ENCODE measurements at regions of chr2 and their contacts with region 1.

Region 1: GRCh38 chr2:197889041-197889440 is 84.6 kb downstream of the PLCL1 start:
- DNase-seq: peak in 8 of 9 donors; percentile 31 to 77 (median 60)
- ATAC-seq: peak; percentile 90
- H3K4me3 ChIP-seq: no peak overlapping the region
- H3K4me3 Mint-ChIP-seq: peak overlapping the region; percentile 26 to 88 (median 72)
- H3K27ac ChIP-seq: peak overlapping the region; percentile 72
- H3K27ac Mint-ChIP-seq: peak overlapping the region; percentile 63 to 97 (median 89)
- H3K4me1 ChIP-seq: peaks cover 0 to 49% of the 10 kb centered on the region in 2 donors
- H3K4me1 Mint-ChIP-seq: peaks cover 27 to 90% (median 71%) of the 10 kb centered on the region in 7 donors
- H3K27me3 ChIP-seq: no peaks in the 10 kb centered on the region
- H3K27me3 Mint-ChIP-seq: no peaks in the 10 kb centered on the region

Region 2: GRCh38 chr2:197838036-197838435 is 51.0 kb before region 1 on chr2:
- CTCF ChIA-PET with region 1: no interaction called
- POLR2A ChIA-PET with region 1: interaction called, 6 read pairs
- intact Hi-C with region 1: loop called (anchors 1 to 2 kb)
- DNase-seq: peak in 7 of 9 donors; percentile 41 to 71 (median 59)
- ATAC-seq: peak; percentile 88
- H3K4me3 ChIP-seq: peak overlapping the region; percentile 31
- H3K4me3 Mint-ChIP-seq: peak overlapping the region; percentile 65 to 84 (median 80)
- H3K27ac ChIP-seq: peak overlapping the region; percentile 75
- H3K27ac Mint-ChIP-seq: peak overlapping the region; percentile 79 to 98 (median 94)
- H3K4me1 ChIP-seq: peaks cover 0 to 55% of the 10 kb centered on the region in 2 donors
- H3K4me1 Mint-ChIP-seq: peaks cover 28 to 88% (median 67%) of the 10 kb centered on the region in 7 donors
- H3K27me3 ChIP-seq: no peaks in the 10 kb centered on the region
- H3K27me3 Mint-ChIP-seq: no peaks in the 10 kb centered on the region

Region 3: DNA sequence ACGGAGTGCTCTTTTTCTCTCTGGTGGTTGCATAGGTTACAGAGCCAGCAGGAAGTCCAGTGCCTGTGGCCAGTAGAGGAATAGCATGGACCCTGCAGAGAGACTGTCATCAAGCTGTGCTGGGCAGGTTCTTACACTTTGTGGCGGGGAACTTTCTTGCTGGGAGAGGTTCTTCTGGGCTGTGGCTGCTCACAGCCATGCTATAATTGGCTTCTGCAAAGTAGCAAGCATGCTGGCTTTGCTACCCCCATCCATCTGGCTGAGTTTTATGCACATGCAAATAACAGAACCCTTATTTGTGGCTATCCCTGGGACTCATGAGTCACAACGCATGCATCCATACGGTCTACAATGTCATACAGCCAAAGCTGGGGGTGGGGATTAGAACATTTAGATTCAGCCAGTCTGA is 15.7 kb before region 1 on chr2:
- CTCF ChIA-PET with region 1: interaction called, 4 read pairs
- POLR2A ChIA-PET with region 1: interaction called, 8 read pairs
- intact Hi-C with region 1: loop called (anchors 1 kb)
- DNase-seq: no peak
- ATAC-seq: no peak
- H3K4me3 ChIP-seq: no peak overlapping the region
- H3K4me3 Mint-ChIP-seq: peak overlapping the region in 1 of 10 donors; percentile 33
- H3K27ac ChIP-seq: no peak overlapping the region
- H3K27ac Mint-ChIP-seq: peak overlapping the region in 3 of 9 donors; percentile 28 to 62 (median 47)
- H3K4me1 ChIP-seq: peaks cover 0 to 34% of the 10 kb centered on the region in 2 donors
- H3K4me1 Mint-ChIP-seq: peaks cover 29 to 92% (median 85%) of the 10 kb centered on the region in 7 donors
- H3K27me3 ChIP-seq: no peaks in the 10 kb centered on the region
- H3K27me3 Mint-ChIP-seq: no peaks in the 10 kb centered on the region

Region 4: DNA sequence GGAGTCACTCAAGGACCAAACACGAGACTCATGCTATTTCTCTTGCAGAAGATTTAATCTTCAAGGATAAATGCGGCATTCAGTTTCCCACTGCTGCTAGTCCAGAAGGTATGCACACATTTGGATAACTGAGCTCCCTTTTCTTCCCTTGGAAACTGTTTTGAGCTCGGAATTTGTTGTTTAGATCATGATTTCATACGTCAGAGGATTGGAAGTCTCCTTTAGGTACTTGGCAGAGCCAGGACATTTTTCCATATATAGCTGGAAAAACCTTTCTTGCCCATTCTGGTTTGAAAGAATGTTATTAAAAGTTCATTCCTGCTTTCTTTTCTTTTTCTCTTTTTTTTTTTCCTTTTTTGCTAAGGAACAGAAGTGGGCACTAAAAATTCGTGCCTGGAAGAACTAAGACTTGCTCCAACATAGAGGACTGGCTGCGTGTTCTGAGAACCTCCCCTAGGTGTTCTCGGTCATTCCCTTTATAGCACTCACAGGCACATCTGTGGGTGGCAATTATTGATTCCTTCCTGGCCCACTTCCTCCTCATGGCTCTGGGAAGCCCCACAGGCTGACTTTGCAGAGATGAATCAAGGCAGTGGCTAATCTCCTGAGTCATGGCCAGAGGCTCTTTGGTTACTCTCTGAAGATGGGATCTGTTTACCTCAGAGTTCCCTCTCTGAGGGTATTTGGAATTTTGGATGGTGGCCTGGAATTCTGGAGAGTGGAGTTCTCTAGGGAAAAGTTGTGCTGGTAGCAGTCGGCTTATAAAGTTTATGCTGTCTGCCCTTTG is 20.1 kb after region 1 on chr2:
- CTCF ChIA-PET with region 1: interaction called, 4 read pairs
- POLR2A ChIA-PET with region 1: interaction called, 6 read pairs
- intact Hi-C with region 1: loop called in 1 of 2 experiments (anchors 2 kb)
- DNase-seq: no peak
- ATAC-seq: no peak
- H3K4me3 ChIP-seq: no peak overlapping the region
- H3K4me3 Mint-ChIP-seq: no peak overlapping the region
- H3K27ac ChIP-seq: no peak overlapping the region
- H3K27ac Mint-ChIP-seq: peak overlapping the region in 1 of 9 donors; percentile 18
- H3K4me1 ChIP-seq: peaks cover 0 to 12% of the 10 kb centered on the region in 2 donors
- H3K4me1 Mint-ChIP-seq: peaks cover 4 to 77% (median 59%) of the 10 kb centered on the region in 7 donors
- H3K27me3 ChIP-seq: no peaks in the 10 kb centered on the region
- H3K27me3 Mint-ChIP-seq: peaks cover 0 to 48% (median 0%) of the 10 kb centered on the region in 5 donors

Region 5: GRCh38 chr2:198004921-198005829 is 116.1 kb after region 1 on chr2:
- CTCF ChIA-PET with region 1: no interaction called
- POLR2A ChIA-PET with region 1: no interaction called
- intact Hi-C with region 1: loop called in 1 of 2 experiments (anchors 5 kb)
- DNase-seq: peak in 5 of 9 donors; percentile 8 to 49 (median 28)
- ATAC-seq: peak; percentile 80
- H3K4me3 ChIP-seq: no peak overlapping the region
- H3K4me3 Mint-ChIP-seq: peak overlapping the region in 8 of 10 donors; percentile 29 to 75 (median 63)
- H3K27ac ChIP-seq: no peak overlapping the region
- H3K27ac Mint-ChIP-seq: peak overlapping the region; percentile 37 to 88 (median 69)
- H3K4me1 ChIP-seq: no peaks in the 10 kb centered on the region
- H3K4me1 Mint-ChIP-seq: peaks cover 12 to 77% (median 60%) of the 10 kb centered on the region in 7 donors
- H3K27me3 ChIP-seq: no peaks in the 10 kb centered on the region
- H3K27me3 Mint-ChIP-seq: no peaks in the 10 kb centered on the region